ENCODE measurements at regions of chr4 and their contacts with region 1.

Region 1: DNA sequence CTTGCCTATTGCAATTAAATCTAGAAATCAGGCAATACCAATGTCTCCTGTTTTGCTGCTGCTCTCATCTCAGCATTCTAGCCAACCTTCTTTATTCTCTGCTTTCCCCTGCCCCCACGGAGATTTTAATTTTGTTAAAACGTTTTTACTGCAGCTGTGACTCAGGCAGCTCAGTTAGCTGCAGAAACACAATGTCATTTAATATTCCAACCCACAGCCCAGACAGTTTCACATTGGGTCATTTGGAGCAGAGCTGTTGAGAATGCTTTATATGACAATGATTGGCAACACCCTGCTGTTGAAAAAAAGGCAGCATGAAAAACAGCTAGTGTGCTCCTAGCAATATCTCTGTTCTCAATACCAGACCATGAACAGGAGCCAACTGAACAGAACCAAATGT is 12.6 kb upstream of the SLC10A4 start:
- DNase-seq: no peak
- H3K4me3 ChIP-seq: no peak overlapping the region
- H3K4me1 ChIP-seq: no peaks in the 10 kb centered on the region
- H3K27me3 ChIP-seq: no peaks in the 10 kb centered on the region

Region 2: DNA sequence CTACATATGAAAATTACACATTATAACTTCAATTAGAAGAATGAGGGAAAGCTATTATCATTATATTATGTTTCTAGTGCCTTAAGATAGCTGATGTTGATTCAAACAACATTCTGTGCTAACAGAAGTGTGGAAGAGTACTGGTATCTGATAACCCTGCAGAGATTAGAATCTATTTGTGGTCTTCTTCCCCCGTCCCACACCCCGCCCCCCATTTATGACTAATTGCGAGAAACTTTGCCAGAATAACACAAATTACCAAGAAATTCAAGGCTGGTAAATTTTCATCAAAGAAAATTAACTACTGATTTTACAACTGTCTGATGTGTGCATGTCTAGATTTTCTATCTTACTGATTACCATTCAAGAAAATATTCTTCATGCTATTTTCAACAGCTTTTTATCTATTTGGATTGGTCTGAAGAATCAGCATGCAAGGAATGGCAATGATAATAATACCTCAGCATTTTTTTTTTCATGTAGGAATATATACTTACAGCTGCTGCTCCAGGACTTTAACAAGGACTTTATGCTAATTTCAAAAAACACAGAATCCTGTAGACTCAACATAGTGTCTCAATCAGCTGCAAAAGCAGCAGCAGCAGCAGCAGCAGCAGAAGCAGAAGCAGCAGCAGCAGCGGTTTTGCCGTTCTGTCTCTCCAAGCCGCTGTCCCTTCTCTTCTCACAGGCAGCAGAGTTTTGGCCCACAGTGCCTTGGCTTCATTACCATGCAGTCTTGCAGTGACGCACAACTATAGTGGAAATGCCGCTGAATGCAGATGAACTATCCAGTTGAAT is 182.8 kb after region 1 on chr4:
- in situ Hi-C with region 1: no loop called
- DNase-seq: peak; percentile 56 to 60
- H3K4me3 ChIP-seq: no peak overlapping the region
- H3K4me1 ChIP-seq: peaks cover 11% of the 10 kb centered on the region
- H3K27me3 ChIP-seq: no peaks in the 10 kb centered on the region

Region 3: DNA sequence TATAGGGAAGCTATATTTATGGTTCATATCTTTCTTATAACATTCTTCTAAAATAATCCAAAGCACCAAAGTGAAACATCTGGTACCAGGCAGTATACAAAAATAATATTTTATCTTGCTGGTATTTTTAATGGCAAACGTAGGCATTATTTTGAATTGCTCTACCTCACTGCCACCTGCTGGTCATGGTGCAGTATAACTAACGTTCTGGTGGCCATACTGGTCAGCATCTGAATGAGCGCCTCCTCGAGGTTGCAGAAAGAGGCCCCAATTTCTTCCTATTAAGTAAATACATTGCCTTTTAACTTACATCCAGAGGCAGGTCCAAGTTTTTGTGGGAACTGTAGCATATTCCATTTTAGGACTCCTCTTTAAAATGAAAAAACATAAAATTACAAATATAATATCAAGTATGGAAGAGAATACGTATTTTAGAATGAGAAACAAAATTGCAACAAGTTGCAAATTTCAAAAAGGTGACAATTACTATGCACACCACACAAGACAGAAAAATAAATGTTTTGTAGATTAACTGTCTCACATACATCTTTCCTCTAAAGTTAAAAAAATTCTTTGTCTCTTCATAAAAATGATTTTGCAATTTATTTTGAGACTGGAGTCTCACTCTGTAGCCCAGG is 492.6 kb after region 1 on chr4:
- in situ Hi-C with region 1: loop called (anchors 25 kb)
- DNase-seq: peak; percentile 86 to 88
- H3K4me3 ChIP-seq: no peak overlapping the region
- H3K4me1 ChIP-seq: no peaks in the 10 kb centered on the region
- H3K27me3 ChIP-seq: no peaks in the 10 kb centered on the region

Measured in HAP-1 (cell line).